Activated T-helper 1 cell treated with anti-CD3 and anti-CD28 coated beads, Interleukin-12 subunit alpha, Interleukin-12 subunit beta, Interleukin-2, Interleukin-4 antibody, amounts not matched to agents 30 ng/mL and 10 ng/mL and 1 ng/mL, durations not matched to agents 14 hours and 24 hours and 36 hours (primary cell): ENCODE measurements at regions of chr18 and their contacts with region 1.

Region 1: GRCh38 chr18:616380-616995 is 19.7 kb downstream of the CLUL1 start:
- DNase-seq: no peak
- H3K4me3 Mint-ChIP-seq: no peak overlapping the region
- H3K27ac Mint-ChIP-seq: no peak overlapping the region
- H3K4me1 Mint-ChIP-seq: no peaks in the 10 kb centered on the region
- H3K27me3 Mint-ChIP-seq: peaks cover 11% of the 10 kb centered on the region

Region 2: GRCh38 chr18:111292-112014 is 505.0 kb before region 1 on chr18:
- intact Hi-C with region 1: loop called (anchors 5 kb)
- DNase-seq: peak; percentile 67
- H3K4me3 Mint-ChIP-seq: peak overlapping the region; percentile 81
- H3K27ac Mint-ChIP-seq: peak overlapping the region; percentile 89
- H3K4me1 Mint-ChIP-seq: peaks cover 13% of the 10 kb centered on the region
- H3K27me3 Mint-ChIP-seq: peaks cover 4% of the 10 kb centered on the region

Region 3: GRCh38 chr18:286515-287310 is 329.8 kb before region 1 on chr18:
- intact Hi-C with region 1: loop called (anchors 2 kb)
- DNase-seq: no peak
- H3K4me3 Mint-ChIP-seq: peak overlapping the region; percentile 42
- H3K27ac Mint-ChIP-seq: peak overlapping the region; percentile 81
- H3K4me1 Mint-ChIP-seq: peaks cover 13% of the 10 kb centered on the region
- H3K27me3 Mint-ChIP-seq: peaks cover 9% of the 10 kb centered on the region

Region 4: GRCh38 chr18:499551-500408 is 116.7 kb before region 1 on chr18:
- intact Hi-C with region 1: loop called (anchors 10 kb)
- DNase-seq: no peak
- H3K4me3 Mint-ChIP-seq: no peak overlapping the region
- H3K27ac Mint-ChIP-seq: no peak overlapping the region
- H3K4me1 Mint-ChIP-seq: no peaks in the 10 kb centered on the region
- H3K27me3 Mint-ChIP-seq: peaks cover 29% of the 10 kb centered on the region

Region 5: GRCh38 chr18:596288-596881 is 20.1 kb before region 1 on chr18:
- intact Hi-C with region 1: loop called (anchors 1 kb)
- DNase-seq: no peak
- H3K4me3 Mint-ChIP-seq: no peak overlapping the region
- H3K27ac Mint-ChIP-seq: no peak overlapping the region
- H3K4me1 Mint-ChIP-seq: peaks cover 14% of the 10 kb centered on the region
- H3K27me3 Mint-ChIP-seq: peaks cover 20% of the 10 kb centered on the region